GM10248 (cell line): ENCODE measurements at regions of chr2 and their contacts with region 1.

Region 1: DNA sequence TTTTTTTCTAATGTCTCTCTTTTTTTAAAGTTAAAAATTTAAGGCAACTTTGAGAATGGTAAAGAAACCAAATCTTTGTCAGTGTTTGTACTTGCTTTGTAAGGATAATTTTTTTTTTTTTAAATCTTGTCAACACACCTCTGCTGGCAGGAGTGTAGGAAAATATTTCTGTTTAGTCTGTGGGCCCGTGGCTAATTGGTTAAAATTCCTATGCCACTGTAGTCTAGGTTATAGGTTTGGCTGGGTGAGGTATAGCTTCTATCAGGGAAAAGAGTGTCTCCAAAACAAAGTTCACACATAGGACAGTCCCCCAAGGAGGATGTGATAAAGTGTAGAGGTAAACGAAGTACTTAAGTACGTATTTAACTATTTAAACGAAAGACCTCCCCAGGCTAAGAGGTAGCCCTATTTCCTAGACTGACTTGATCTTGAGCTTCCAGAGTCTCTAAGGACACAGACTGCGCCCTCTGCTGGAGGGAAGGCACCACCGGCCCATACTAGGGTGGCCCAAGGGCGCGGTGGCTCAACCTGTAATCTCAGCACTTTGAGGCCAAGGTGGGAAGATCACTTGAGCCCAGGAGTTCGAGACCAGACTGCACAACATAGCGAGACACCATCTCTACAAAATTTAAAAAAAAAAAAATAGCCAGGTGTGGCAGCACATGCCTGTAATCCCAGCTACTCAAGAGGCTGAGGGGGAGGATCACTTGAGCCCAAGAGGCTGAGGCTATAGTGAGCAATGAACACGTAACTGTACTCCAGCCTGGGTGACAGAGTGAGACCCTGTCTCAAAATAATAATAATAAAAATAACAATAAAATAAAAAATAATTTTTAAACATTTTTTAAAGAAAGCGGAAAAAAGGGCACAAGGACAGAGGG is 8.9 kb downstream of the TEX44 start:
- DNase-seq: peak; percentile 81
- CTCF ChIP-seq: peak; percentile 90

Region 2: GRCh38 chr2:231482806-231483391 is 118.7 kb before region 1 on chr2:
- CTCF ChIA-PET with region 1: interaction called, 17 read pairs
- POLR2A ChIA-PET with region 1: no interaction called
- DNase-seq: peak; percentile 89
- CTCF ChIP-seq: peak; percentile 98

Region 3: DNA sequence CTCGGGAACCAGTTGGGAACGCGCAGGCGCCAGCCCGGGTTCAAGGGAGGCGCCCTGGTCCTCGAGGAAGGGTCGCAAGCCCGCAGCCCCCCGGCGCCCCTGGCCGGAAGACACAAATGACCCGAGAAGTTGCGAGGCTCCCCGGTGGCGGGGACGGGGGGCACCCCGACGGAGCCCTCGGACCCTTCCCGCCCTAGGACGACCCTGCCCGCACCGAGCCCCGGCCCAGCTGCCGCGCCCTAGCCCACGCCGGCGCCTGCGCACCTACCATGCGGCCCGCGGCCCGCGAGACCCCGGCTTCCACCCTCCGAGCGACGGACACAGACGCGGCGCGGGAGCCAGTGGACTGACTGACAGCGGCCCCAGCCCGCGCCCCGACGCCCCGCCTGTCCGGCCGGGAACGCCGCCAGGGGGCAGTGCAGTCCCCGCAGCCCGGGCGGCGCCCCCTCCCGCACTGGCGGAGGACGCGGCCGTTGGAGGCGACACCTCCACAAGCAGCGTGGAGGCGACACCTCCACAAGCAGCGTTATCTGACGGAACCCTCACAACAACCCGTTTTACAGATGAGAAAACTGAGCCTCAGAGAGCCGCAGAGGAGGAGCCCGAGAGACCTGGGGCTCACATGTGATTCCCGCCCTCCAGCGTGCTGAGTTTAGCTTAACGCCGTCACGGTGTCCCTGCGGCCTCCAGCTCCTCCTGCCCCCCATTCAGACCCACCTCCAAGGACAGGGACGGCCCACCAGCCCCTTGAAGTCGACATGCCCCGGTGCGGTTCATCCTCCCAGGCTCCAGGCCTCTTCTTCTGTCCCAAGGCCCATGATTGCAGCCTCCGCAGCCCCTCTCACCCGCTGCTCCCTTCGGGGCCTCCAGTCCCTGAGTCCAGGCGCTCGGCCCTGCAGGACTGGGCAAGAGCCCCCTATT is 71.2 kb before region 1 on chr2 and contains the start of gene NMUR1:
- CTCF ChIA-PET with region 1: interaction called, 40 read pairs
- POLR2A ChIA-PET with region 1: no interaction called
- DNase-seq: peak; percentile 87
- CTCF ChIP-seq: peak; percentile 86

Region 4: DNA sequence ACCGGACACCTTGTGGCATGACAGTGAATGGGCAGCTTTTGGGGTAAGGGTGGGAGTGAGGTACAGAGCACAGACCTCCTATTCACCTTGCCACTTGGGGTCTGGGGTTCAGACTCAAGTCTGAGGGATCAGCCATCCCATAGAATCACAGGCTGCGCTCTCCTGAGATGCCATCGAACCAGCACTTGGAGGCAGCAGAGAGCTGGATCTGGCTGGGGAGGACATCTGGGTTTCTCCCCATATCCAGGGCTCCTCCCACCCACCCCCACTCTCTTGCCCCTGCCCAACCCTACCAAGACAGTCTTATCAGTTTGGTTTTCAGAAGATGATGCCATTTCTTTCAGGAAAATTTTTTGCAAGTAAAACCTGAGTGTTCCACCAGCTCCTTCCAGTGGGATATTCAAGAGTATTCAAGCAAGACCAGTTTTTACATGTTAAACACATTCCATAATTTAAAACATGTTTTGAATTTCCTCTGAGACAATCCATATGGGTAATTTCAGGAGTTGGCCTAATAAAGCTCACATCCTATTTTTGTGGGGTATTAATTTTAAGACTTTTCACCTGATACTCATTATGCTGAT is 38.1 kb before region 1 on chr2:
- CTCF ChIA-PET with region 1: interaction called, 176 read pairs
- POLR2A ChIA-PET with region 1: no interaction called
- DNase-seq: peak; percentile 79
- CTCF ChIP-seq: peak; percentile 76

Region 5: DNA sequence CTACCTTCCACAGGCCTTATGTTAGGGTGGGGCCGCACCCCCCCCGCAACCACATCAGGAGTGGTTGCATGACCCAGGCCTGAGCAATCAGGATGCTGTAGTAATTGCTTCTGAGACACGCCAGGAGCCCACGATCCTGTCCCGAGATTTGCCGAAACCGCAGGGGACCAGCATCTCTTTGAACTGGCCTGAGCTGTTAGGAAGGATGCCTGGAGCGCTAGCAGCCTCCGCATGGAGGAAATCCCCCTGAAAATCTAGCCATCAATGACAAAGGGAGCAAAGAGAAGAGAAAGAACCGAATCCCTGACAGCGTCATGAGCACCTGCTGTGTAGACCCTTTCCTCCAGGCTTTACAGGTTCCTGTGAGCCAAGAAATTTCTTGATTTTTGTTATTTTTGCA is 17.6 kb before region 1 on chr2:
- CTCF ChIA-PET with region 1: interaction called, 40 read pairs
- POLR2A ChIA-PET with region 1: no interaction called
- DNase-seq: no peak
- CTCF ChIP-seq: no peak

Region 6: GRCh38 chr2:231612179-231613053 is 10.8 kb after region 1 on chr2:
- CTCF ChIA-PET with region 1: interaction called, 57 read pairs
- POLR2A ChIA-PET with region 1: interaction called, 5 read pairs
- DNase-seq: peak; percentile 89
- CTCF ChIP-seq: peak; percentile 85